ENCODE measurements at regions of chr17 and their contacts with region 1.

Region 1: DNA sequence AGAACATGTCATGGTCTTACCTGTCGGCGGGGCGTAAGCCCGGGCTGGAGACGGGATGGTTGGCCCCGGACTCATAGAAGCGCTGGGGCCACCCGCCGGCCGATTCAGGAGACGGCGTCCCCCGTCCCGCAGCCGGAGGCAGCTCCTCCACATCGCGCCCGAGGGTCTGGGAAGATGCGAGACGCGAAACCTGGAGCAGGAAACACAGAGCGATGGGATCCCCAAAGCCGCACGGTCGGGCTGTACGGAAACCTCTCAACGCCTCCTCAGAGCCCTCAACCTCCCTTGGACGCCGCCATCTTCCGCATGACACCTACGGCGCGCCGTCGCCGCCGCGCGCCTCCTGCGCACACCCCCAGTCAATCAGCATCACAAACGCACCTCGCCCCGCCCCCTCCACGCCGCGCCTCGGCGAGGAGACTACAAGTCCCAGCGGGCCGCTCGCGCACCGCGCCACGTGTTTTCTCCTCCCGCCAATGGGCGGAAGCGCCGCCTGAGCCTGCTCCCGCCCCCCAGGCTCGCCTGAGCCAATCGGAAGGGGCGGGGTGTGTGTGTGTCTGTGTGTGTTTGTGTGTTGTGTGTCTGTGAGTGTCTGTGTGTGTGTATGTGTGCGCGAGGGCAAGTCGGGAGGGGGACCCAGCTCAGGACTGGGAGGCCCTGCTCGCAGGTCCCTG is at the starts of genes ATPAF2 and GID4:
- DNase-seq: peak; percentile 100
- total RNA-seq, gene ATPAF2: 12.1 to 18.3 TPM
- total RNA-seq, gene GID4: 12.6 to 21.4 TPM

Region 2: GRCh38 chr17:17675925-17676534 is 363.0 kb before region 1 on chr17:
- intact Hi-C with region 1: loop called (anchors 5 to 10 kb)
- DNase-seq: no peak

Region 3: GRCh38 chr17:17877529-17878358 is 161.3 kb before region 1 on chr17:
- intact Hi-C with region 1: loop called in 1 of 2 experiments (anchors 10 kb)
- DNase-seq: peak; percentile 95

Region 4: GRCh38 chr17:17890773-17891759 is 147.9 kb before region 1 on chr17:
- intact Hi-C with region 1: loop called in 1 of 2 experiments (anchors 10 kb)
- DNase-seq: no peak

Measured in posterior vena cava (tissue), 2 donors.